ENCODE measurements at regions of chr12 and their contacts with region 1.

Region 1: DNA sequence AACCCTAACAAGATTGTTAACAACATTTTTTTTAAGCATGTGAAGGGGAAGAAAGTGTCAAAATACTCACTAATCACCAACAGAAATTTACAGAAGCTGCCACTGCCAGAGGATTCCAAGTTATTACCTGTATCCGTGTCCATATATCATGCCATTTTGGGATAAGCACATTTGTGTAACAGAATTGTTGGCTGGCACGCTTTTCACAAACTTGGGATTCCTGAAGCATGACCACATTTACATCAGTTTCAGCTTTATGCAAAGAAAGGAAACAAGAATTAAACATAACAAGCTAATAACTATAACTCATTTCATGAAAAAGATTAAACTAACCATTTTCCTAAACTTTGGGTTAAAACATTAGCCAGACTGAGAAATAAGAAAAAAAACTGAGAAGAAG is 5.9 kb downstream of the NEMP1 start:
- DNase-seq: no peak
- H3K4me3 ChIP-seq: no peak overlapping the region
- H3K27ac ChIP-seq: no peak overlapping the region
- H3K4me1 ChIP-seq: peaks cover 0 to 2% of the 10 kb centered on the region in 2 donors
- H3K27me3 ChIP-seq: no peaks in the 10 kb centered on the region
- CTCF ChIP-seq: no peak
- POLR2A ChIP-seq: no peak

Region 2: DNA sequence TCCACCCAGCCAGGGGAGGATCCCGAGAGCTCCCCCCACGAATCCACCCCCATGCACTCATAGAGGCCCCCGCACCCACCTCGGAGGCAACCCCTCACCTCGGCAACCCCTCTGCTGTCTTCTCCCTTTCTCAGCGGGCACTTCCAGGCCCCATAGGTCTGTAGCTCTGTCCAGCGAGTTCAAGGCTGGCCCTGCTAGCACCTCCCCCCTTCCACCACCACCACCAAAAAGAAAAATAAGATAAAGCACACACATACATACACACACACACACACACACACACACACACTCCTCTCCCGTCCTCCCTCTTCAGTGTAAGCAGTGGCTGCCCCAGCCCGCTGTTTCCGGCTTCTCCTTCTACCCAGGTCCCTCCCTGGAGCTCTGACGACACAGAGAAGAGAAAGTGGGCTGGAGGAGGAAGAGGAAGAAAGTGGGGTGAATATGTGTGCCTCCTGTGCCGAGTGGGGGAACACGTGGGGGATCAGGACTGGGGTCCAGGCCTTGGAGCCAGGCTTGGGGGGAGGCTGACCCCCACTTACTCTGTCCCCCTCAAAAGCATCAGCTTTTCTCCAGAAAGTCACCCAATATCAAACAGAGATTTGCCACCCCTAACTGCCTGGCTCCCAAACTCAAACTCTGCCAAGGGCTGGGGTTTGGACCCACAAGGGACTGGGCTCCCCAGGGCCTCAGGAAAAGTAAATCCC is 38.5 kb after region 1 on chr12 and contains the start of gene STAT6:
- intact Hi-C with region 1: loop called (anchors 5 kb)
- DNase-seq: peak; percentile 79 to 86
- H3K4me3 ChIP-seq: peak within 1 kb of the TSS; percentile 65 to 89 (median 85)
- H3K27ac ChIP-seq: peak within 1 kb of the TSS; percentile 96 to 100
- H3K4me1 ChIP-seq: no peaks in the 10 kb centered on the region
- H3K27me3 ChIP-seq: no peaks in the 10 kb centered on the region
- CTCF ChIP-seq: peak in 2 of 3 donors; percentile 23 to 32
- POLR2A ChIP-seq: peak; percentile 51
- total RNA-seq, gene STAT6: 139 to 147 (median 146) TPM

Region 3: DNA sequence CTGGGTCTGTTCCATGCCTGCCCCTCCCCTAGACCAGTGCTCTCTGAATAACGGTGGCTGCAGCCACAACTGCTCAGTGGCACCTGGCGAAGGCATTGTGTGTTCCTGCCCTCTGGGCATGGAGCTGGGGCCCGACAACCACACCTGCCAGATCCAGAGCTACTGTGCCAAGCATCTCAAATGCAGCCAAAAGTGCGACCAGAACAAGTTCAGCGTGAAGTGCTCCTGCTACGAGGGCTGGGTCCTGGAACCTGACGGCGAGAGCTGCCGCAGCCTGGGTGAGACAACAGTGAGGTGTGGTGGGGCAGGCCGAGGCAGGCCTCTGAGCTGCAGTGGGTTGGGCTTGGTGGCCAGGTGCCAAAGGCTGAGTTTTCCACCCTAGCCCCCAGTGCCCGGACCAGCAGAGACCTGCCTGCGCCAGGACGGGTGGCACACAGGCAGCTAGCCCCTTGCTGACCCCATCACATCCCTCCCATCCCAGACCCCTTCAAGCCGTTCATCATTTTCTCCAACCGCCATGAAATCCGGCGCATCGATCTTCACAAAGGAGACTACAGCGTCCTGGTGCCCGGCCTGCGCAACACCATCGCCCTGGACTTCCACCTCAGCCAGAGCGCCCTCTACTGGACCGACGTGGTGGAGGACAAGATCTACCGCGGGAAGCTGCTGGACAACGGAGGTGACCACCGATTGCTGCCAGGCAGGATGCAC is 102.9 kb after region 1 on chr12:
- intact Hi-C with region 1: loop called (anchors 5 kb)
- DNase-seq: peak; percentile 86 to 88
- H3K4me3 ChIP-seq: peak overlapping the region in 2 of 3 donors; percentile 22 to 50
- H3K27ac ChIP-seq: peak overlapping the region; percentile 56 to 74
- H3K4me1 ChIP-seq: no peaks in the 10 kb centered on the region
- H3K27me3 ChIP-seq: no peaks in the 10 kb centered on the region
- CTCF ChIP-seq: peak; percentile 77 to 87 (median 80)
- POLR2A ChIP-seq: no peak

Measured in breast epithelium (tissue), 4 donors.